Endothelial cell of umbilical vein (primary cell): ENCODE measurements at regions of chr10 and their contacts with region 1.

Region 1: GRCh38 chr10:102009801-102010425 is 46.1 kb downstream of the ARMH3 start:
- DNase-seq: peak; percentile 83
- H3K4me3 ChIP-seq: no peak overlapping the region
- H3K27ac ChIP-seq: no peak overlapping the region
- H3K4me1 ChIP-seq: no peaks in the 10 kb centered on the region
- H3K27me3 ChIP-seq: no peaks in the 10 kb centered on the region
- CTCF ChIP-seq: peak; percentile 85 to 94
- POLR2A ChIP-seq: no peak

Region 2: GRCh38 chr10:101558202-101558601 is 451.7 kb before region 1 on chr10:
- CTCF ChIA-PET with region 1: no interaction called
- POLR2A ChIA-PET with region 1: no interaction called
- dilution Hi-C with region 1: no loop called
- intact Hi-C with region 1: no loop called
- DNase-seq: no peak
- H3K4me3 ChIP-seq: no peak overlapping the region
- H3K27ac ChIP-seq: no peak overlapping the region
- H3K4me1 ChIP-seq: no peaks in the 10 kb centered on the region
- H3K27me3 ChIP-seq: no peaks in the 10 kb centered on the region
- CTCF ChIP-seq: no peak
- POLR2A ChIP-seq: no peak

Region 3: DNA sequence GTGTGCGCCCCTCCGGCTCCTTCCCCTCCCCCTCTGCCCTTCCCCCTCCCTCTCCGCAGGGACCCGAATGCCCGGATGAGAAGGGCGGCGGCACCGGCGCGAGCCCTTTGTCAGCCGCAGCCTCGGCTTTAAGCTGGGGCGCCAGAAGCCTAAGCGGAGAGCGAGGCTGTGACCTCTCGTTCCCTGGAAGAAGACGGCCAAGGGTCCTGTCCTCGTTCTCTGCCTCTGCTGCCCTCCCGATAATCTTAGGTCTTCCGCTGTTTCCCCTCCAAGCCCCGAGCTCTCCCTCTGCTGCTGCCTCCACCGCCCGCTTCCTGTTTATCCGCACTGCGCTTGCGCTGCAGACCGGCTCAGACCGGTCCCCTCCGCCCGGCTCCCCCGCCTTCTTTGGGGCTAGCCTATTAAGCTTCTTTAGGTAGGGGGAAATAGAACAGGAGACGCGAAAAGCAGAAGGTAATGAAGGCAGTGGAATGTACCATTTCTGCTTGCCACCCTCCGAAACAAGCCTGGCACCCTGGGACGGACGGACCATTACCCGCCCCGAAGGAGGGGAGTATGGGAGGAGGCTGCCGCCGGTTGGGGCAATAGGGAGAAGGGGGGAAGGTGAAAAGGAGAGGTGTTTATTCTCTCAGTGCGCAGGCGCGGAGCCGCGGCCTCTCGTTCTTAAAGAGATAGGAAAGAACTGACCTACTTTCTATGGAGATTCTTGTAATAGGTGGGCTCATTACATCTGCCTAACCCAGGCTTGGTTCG is 191.6 kb before region 1 on chr10 and contains the start of gene OGA:
- CTCF ChIA-PET with region 1: interaction called, 29 read pairs
- POLR2A ChIA-PET with region 1: interaction called, 3 read pairs
- dilution Hi-C with region 1: no loop called
- intact Hi-C with region 1: no loop called
- DNase-seq: peak; percentile 100
- H3K4me3 ChIP-seq: peak within 1 kb of the TSS; percentile 82 to 99 (median 90)
- H3K27ac ChIP-seq: peak within 1 kb of the TSS; percentile 83
- H3K4me1 ChIP-seq: peaks cover 19% of the 10 kb centered on the region
- H3K27me3 ChIP-seq: no peaks in the 10 kb centered on the region
- CTCF ChIP-seq: no peak
- POLR2A ChIP-seq: peak; percentile 87
- total RNA-seq, gene OGA: 113 and 118 TPM in 2 replicates

Region 4: DNA sequence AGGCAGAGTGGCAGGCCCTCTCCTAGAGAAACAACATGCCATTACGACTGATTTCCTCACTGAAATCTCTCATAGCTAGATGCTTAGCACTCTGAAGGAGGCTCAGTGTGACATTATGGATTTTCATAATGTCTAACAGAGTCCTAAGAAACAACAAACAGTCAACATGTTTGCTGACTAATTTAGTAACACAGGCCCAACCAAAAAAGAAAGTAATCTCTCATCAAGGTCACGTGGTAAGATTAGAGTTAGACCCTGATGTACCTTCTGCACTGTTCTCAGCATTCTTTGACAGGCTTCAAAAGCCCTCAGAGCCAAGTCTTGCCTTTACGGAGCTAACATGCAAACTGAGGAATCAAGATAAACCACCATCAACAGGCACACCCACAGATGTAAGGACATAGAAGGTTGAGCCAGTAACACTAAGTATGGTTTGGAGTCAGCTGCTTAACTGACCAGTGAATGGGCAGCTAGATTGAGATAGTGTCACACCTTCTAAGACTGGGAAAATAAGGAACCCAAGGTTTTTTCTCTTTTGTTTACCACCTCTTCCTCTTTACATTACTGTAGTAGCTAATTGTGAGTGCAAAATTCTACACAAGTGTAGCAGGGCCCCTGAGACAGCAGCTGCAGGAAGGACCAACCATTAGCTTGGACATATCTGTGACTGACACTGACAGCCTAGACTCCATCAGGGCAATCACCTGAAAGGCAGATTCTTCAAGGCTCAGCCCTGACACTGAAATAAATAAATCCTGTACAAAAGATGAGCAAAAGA is 151.0 kb before region 1 on chr10:
- CTCF ChIA-PET with region 1: interaction called, 23 read pairs
- POLR2A ChIA-PET with region 1: no interaction called
- dilution Hi-C with region 1: no loop called
- intact Hi-C with region 1: no loop called
- DNase-seq: no peak
- H3K4me3 ChIP-seq: no peak overlapping the region
- H3K27ac ChIP-seq: no peak overlapping the region
- H3K4me1 ChIP-seq: peaks cover 12% of the 10 kb centered on the region
- H3K27me3 ChIP-seq: no peaks in the 10 kb centered on the region
- CTCF ChIP-seq: no peak
- POLR2A ChIP-seq: no peak

Region 5: GRCh38 chr10:101889256-101890210 is 120.4 kb before region 1 on chr10:
- CTCF ChIA-PET with region 1: interaction called, 559 read pairs
- POLR2A ChIA-PET with region 1: interaction called, 4 read pairs
- dilution Hi-C with region 1: no loop called
- intact Hi-C with region 1: loop called (anchors 1 kb)
- DNase-seq: peak; percentile 81
- H3K4me3 ChIP-seq: no peak overlapping the region
- H3K27ac ChIP-seq: no peak overlapping the region
- H3K4me1 ChIP-seq: no peaks in the 10 kb centered on the region
- H3K27me3 ChIP-seq: no peaks in the 10 kb centered on the region
- CTCF ChIP-seq: peak; percentile 81 to 84
- POLR2A ChIP-seq: no peak

Region 6: DNA sequence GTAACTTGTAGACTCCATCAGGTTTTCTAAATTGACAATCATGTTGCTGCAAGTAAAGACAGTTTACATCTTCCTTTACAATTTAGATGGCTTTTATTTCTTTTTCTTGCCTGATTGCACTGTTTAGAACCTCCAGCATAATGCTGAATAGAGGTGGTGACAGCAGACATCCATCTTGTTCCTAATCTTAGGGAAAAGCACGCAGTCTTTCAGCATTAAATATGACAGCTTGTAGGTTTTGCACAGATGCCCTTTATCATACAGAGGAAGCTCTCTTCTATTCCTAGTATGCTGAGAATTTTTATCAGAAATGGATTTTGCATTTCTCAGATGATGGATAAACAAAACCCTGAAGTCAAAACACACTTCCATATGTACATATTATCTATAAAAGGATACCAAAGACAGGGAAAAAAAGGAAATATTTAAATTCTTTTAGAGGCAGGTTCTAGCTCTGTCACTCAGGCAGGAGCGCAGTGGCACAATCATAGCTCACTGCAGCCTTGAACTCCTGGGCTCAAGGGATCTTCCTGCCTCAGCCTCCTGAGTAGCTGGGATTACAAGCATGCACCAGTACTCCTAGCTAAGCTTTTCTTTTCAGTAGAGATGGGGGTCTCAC is 97.2 kb before region 1 on chr10:
- CTCF ChIA-PET with region 1: interaction called, 17 read pairs
- POLR2A ChIA-PET with region 1: no interaction called
- dilution Hi-C with region 1: no loop called
- intact Hi-C with region 1: no loop called
- DNase-seq: no peak
- H3K4me3 ChIP-seq: no peak overlapping the region
- H3K27ac ChIP-seq: no peak overlapping the region
- H3K4me1 ChIP-seq: no peaks in the 10 kb centered on the region
- H3K27me3 ChIP-seq: no peaks in the 10 kb centered on the region
- CTCF ChIP-seq: no peak
- POLR2A ChIP-seq: no peak

Region 7: DNA sequence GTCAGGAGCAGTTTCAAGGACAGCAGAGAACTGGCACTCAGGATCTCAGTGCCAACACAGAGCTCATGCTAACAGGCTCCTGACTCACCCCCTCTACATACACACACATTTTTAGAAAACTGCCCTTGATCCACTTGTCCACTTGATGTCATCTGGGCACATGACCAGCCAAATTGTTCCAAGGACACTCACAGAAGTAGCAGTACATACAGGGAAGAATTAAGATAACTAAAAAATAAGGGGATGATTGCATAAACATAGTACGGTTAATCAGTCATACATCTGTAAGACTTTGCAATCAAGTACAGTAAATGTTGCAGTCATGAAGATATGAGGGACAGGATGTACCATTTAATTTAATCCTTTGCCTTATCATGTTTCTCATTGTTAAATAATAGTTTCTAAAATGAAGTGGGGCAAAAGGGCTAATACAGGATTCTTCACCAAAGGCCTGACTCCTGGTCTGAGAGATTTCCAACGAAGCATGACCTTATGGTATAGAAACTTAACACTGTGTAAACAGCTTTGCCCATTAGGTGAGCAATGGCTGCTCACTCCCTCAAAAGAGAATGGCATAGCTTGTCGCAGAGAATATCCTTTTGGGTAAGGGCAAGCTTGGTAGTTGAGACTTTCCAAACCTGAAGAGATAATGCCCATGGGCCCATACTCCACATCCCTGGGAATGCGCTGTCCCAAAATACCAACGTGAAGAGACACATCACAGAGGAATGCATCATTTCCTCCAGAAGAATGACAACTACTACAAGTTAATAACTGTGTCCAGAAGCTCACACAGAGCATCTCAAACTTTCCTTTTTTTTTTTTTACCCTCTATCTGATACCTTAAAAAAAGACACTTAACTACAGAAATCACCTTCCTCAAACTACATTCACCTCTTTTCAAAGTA is 48.1 kb before region 1 on chr10:
- CTCF ChIA-PET with region 1: interaction called, 23 read pairs
- POLR2A ChIA-PET with region 1: no interaction called
- dilution Hi-C with region 1: no loop called
- intact Hi-C with region 1: no loop called
- DNase-seq: no peak
- H3K4me3 ChIP-seq: no peak overlapping the region
- H3K27ac ChIP-seq: no peak overlapping the region
- H3K4me1 ChIP-seq: peaks cover 7% of the 10 kb centered on the region
- H3K27me3 ChIP-seq: no peaks in the 10 kb centered on the region
- CTCF ChIP-seq: no peak
- POLR2A ChIP-seq: no peak

Region 8: GRCh38 chr10:102024799-102025198 is 14.9 kb after region 1 on chr10:
- CTCF ChIA-PET with region 1: interaction called, 28 read pairs
- POLR2A ChIA-PET with region 1: interaction called, 3 read pairs
- dilution Hi-C with region 1: no loop called
- intact Hi-C with region 1: no loop called
- DNase-seq: no peak
- H3K4me3 ChIP-seq: no peak overlapping the region
- H3K27ac ChIP-seq: no peak overlapping the region
- H3K4me1 ChIP-seq: no peaks in the 10 kb centered on the region
- H3K27me3 ChIP-seq: no peaks in the 10 kb centered on the region
- CTCF ChIP-seq: no peak
- POLR2A ChIP-seq: no peak

Region 9: GRCh38 chr10:102132563-102133372 is 122.9 kb after region 1 on chr10 and contains the start of gene PPRC1:
- CTCF ChIA-PET with region 1: no interaction called
- POLR2A ChIA-PET with region 1: no interaction called
- dilution Hi-C with region 1: no loop called
- intact Hi-C with region 1: no loop called
- DNase-seq: peak; percentile 99
- H3K4me3 ChIP-seq: peak within 1 kb of the TSS; percentile 52 to 82 (median 62)
- H3K27ac ChIP-seq: peak within 1 kb of the TSS; percentile 73
- H3K4me1 ChIP-seq: peaks cover 20% of the 10 kb centered on the region
- H3K27me3 ChIP-seq: no peaks in the 10 kb centered on the region
- CTCF ChIP-seq: peak; percentile 90 to 97
- POLR2A ChIP-seq: peak; percentile 85
- total RNA-seq, gene PPRC1: 49.9 and 52.9 TPM in 2 replicates